Activated B cell treated with CpG ODN at 0.5 μM for 24 hours (primary cell): ENCODE measurements at regions of chr19 and their contacts with region 1.

Region 1: DNA sequence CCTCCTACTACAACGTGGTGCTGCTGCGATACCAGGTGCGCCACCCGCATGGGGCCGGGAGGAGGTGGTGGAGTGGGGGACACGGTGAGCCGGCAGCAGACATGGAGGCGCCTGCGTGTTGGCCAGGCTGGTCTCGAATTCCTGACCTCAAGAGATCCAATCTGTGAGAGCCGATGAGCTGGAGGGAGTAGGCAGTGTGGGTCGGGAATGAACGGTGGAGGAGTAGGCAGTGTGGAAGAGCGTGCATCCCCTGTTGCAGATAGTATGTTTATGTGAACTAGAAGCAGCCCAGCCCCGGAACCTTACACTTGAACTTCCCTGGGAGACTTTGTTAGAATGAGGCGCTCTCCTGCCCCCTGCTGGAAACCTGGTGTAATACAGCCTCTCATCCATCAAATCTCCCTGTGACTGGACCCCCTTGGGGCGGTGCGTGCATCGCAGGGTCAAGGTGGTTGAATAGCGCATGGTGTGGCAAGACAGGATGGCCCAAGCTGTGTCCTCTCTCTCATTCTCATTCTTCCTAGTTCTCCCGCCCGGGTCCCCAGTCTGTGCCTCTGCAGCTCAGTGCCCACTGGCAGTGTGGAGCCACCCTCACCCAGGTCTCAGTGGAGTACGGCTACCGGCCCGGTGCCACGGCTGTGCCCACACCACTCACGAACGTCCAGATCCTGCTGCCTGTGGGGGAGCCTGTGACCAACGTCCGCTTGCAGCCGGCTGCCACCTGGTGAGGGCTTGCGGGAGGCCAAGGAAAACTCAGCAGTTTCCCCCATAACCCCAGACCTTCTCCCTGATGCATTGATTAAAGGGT is 10.5 kb upstream of the B3GNT3 start:
- DNase-seq: peak; percentile 62
- ATAC-seq: peak; percentile 89
- H3K4me3 Mint-ChIP-seq: no peak overlapping the region
- H3K27ac Mint-ChIP-seq: no peak overlapping the region
- H3K4me1 Mint-ChIP-seq: peaks cover 9% of the 10 kb centered on the region
- H3K27me3 Mint-ChIP-seq: no peaks in the 10 kb centered on the region
- CTCF ChIP-seq: no peak

Region 2: DNA sequence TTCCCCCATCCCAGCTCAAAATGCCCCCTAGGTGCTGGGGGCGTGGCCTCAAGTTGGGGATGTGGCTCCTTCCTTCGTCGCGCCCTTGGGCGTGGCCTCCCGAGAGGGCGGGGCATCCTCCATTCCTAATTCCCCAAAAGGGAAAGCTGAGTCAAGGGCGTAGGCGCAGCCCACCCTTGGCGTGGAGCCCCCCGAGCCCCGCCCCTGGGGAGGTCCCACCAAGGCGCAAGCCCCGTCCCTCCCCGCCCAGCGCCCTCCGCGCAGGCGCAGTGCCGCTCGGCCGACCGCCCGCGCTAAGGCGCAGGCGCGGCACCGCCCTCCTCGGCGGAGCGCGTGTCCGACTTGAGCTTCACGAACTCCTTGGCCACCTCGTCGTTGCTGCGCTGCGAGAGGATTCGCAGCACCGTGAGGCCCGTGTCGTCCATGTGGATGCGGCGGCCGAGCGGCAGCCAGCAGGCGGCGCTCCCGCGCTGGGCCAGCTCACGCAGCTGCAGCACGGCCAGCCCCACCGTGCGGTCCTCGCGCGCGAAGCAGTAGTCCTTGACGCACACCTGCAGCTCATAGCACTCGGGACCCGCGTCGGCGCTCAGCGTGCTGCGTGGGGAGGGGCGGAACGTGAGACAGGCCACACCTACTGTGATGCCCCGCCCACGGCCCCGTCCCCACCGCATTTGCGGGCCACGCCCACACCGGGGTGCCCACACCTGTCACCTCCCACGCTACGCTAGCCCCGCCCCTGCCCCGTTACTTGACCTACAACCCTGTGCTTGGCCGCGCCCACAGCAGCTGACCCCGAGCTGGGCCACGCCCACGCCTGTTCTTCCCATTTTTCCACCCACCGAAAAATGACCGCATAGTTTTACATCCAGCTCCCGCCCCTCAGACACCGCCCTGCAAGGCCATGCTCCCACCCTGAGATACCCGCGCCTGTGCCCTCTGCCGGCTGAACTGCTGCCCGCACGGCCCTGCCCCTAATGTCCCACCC is 178.4 kb before region 1 on chr19:
- CTCF ChIA-PET with region 1: no interaction called
- POLR2A ChIA-PET with region 1: no interaction called
- intact Hi-C with region 1: loop called (anchors 1 kb)
- DNase-seq: peak; percentile 80
- ATAC-seq: peak; percentile 92
- H3K4me3 Mint-ChIP-seq: peak overlapping the region; percentile 83
- H3K27ac Mint-ChIP-seq: peak overlapping the region; percentile 69
- H3K4me1 Mint-ChIP-seq: peaks cover 15% of the 10 kb centered on the region
- H3K27me3 Mint-ChIP-seq: peaks cover 30% of the 10 kb centered on the region
- CTCF ChIP-seq: no peak

Region 3: DNA sequence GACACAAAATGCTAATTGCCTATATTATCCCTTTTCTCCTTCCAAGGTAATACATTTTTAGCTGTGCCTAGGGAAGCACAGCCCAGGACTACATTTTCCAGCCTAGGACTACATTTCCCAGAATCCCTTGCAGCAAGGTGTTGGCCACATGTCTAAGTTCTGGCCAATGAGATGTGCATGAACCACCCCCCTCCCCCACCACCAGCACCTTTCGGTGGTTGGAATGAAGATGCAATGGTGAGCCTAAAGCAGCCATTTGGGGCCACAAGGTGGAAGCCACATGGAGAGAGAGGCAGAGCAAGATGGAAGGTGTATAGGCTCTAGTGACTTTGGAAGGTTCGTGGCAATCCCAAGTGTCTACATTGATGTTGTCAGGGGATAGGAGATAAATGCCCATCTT is 112.5 kb before region 1 on chr19:
- CTCF ChIA-PET with region 1: no interaction called
- POLR2A ChIA-PET with region 1: no interaction called
- intact Hi-C with region 1: no loop called
- DNase-seq: no peak
- ATAC-seq: no peak
- H3K4me3 Mint-ChIP-seq: no peak overlapping the region
- H3K27ac Mint-ChIP-seq: no peak overlapping the region
- H3K4me1 Mint-ChIP-seq: no peaks in the 10 kb centered on the region
- H3K27me3 Mint-ChIP-seq: peaks cover 6% of the 10 kb centered on the region
- CTCF ChIP-seq: no peak

Region 4: DNA sequence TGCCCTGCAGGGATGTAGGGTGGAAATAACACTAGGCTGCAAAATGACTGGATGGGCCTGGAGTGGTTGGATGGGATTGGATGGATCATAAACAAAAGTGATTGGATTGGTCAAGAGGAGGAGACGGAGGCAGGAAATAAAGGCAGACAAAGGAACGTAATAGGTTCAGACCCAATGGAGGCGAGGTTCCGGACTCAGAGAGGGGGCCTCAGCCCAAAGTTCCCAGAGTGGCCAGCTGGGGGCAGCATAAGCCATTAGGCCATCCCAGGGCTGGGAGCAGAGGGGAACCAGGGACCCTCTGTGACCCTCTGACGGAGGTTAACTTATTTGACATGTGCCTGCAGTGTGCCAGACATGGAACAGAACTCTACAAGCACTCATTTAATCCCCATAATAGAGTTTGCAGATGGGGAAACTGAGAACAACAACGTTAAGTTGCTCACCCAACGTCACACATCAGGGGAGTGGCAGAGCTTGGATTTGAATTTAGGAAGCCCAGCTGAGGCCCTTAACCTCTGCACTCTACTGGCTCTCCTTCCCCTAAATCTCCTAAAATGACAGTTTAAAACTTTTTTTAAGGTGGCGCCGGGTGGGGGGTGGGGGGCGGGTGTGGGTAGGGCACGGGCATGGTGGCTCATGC is 80.5 kb before region 1 on chr19:
- CTCF ChIA-PET with region 1: interaction called, 22 read pairs
- POLR2A ChIA-PET with region 1: interaction called, 6 read pairs
- intact Hi-C with region 1: loop called (anchors 1 kb)
- DNase-seq: peak; percentile 70
- ATAC-seq: peak; percentile 97
- H3K4me3 Mint-ChIP-seq: no peak overlapping the region
- H3K27ac Mint-ChIP-seq: no peak overlapping the region
- H3K4me1 Mint-ChIP-seq: peaks cover 2% of the 10 kb centered on the region
- H3K27me3 Mint-ChIP-seq: peaks cover 8% of the 10 kb centered on the region
- CTCF ChIP-seq: peak; percentile 64